Natural killer cell (primary cell): ENCODE measurements at regions of chr5 and their contacts with region 1.

Region 1: DNA sequence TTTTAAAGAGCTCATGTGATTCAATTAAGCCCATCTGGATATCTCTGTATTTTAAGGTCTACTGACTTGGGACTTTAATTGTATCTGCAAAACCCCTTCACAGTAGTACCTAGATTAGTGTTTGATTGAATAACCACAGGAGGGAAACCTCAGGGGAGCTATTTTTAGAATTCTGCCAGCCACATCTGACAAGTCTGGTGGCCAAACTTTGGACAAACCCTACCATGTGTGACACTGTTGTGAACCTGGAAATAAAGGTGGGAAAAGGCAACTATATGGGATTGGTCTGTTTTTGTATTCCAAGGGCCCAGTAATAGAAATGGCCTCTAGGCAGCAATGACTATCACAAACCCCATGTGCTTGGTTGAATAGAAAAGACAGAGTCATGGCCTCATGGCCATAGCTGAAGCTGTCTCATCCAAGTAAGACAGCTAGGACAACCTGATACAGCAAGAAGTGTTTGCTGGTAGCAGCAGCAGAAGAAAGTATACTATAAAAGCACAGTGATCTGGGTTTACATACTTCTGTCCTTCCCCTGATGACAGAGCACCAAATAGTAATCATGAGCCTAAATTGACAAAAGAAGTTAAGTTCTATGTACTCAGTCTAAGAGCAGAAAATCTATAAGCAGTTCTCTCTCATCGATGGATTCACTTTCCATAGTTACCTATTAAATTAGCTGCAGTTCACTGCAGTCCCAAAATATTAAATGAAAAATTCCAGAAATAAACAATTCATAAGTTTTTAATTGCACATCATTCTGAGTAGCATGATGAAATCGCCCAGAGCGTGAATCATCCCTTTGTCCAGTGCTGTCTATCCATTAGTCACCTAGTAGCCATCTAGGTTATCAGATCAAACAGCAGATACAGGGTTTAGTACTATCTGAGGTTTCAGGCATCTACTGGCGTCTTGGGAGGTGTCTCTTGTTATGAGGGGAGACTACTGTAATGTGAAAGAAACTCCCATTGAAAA is 189.8 kb downstream of the ARHGAP26 start:
- DNase-seq: no peak
- ATAC-seq: peak; percentile 62 to 74 (median 64)
- H3K4me3 ChIP-seq: no peak overlapping the region
- H3K4me3 Mint-ChIP-seq: peak overlapping the region; percentile 76
- H3K27ac ChIP-seq: peak overlapping the region; percentile 15
- H3K27ac Mint-ChIP-seq: peak overlapping the region; percentile 83 to 85
- H3K4me1 ChIP-seq: peaks cover 27% of the 10 kb centered on the region
- H3K4me1 Mint-ChIP-seq: peaks cover 67 to 70% of the 10 kb centered on the region in 2 donors
- H3K27me3 ChIP-seq: no peaks in the 10 kb centered on the region
- H3K27me3 Mint-ChIP-seq: no peaks in the 10 kb centered on the region
- CTCF ChIP-seq: no peak

Region 2: DNA sequence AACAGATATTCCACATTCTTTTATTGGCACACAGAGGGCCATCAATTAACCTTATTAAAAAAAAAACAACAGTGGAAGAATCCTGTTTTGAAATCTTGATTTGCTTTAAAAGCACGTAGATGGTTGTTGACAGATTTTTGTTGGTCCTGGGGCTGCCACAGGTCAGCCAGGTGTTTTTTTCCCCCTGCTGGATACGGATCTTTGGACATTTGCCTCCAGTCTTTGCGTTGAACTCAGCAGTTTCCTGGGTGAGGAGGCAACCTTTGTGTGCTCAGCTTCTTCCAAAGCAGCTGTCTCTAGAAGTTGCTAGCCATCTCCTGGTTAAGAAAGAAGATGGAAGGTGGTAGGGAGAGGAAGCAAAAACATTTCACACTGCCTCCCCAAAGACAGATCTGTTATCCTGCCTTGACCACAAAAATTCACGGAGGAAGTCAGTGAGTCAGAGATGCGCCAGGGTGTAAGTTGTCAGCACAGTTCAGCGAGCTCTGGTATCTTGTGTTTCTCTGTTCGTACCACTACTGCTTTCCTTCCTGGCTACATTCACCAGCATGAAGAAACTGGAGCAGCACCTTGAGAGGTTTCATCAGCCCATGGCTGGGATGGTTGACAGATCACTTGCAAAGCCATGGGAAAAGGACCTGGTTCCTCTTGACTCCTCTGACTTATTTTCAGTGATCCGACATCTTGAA is 17.5 kb after region 1 on chr5:
- intact Hi-C with region 1: loop called (anchors 2 kb)
- DNase-seq: peak; percentile 63 to 87
- ATAC-seq: peak; percentile 83 to 96 (median 93)
- H3K4me3 ChIP-seq: no peak overlapping the region
- H3K4me3 Mint-ChIP-seq: peak overlapping the region; percentile 82
- H3K27ac ChIP-seq: peak overlapping the region; percentile 93
- H3K27ac Mint-ChIP-seq: peak overlapping the region; percentile 89 to 91
- H3K4me1 ChIP-seq: peaks cover 78% of the 10 kb centered on the region
- H3K4me1 Mint-ChIP-seq: peaks cover 97 to 98% of the 10 kb centered on the region in 2 donors
- H3K27me3 ChIP-seq: no peaks in the 10 kb centered on the region
- H3K27me3 Mint-ChIP-seq: no peaks in the 10 kb centered on the region
- CTCF ChIP-seq: no peak

Region 3: GRCh38 chr5:143200781-143201398 is 240.9 kb after region 1 on chr5:
- intact Hi-C with region 1: no loop called
- DNase-seq: no peak
- ATAC-seq: peak in 1 of 3 donors; percentile 26
- H3K4me3 ChIP-seq: no peak overlapping the region
- H3K4me3 Mint-ChIP-seq: no peak overlapping the region
- H3K27ac ChIP-seq: no peak overlapping the region
- H3K27ac Mint-ChIP-seq: no peak overlapping the region
- H3K4me1 ChIP-seq: no peaks in the 10 kb centered on the region
- H3K4me1 Mint-ChIP-seq: peaks cover 40 to 50% of the 10 kb centered on the region in 2 donors
- H3K27me3 ChIP-seq: no peaks in the 10 kb centered on the region
- H3K27me3 Mint-ChIP-seq: no peaks in the 10 kb centered on the region
- CTCF ChIP-seq: no peak